ENCODE measurements at regions of chr3 and their contacts with region 1.

Region 1: GRCh38 chr3:5122030-5122740 is at the start of gene ARL8B:
- DNase-seq: peak; percentile 87 to 98 (median 91)
- ATAC-seq: peak; percentile 99
- H3K4me3 ChIP-seq: peak within 1 kb of the TSS; percentile 93 to 99 (median 96)
- H3K27ac ChIP-seq: peak within 1 kb of the TSS; percentile 62 to 87 (median 80)
- H3K4me1 ChIP-seq: peaks cover 0 to 25% (median 12%) of the 10 kb centered on the region in 3 donors
- H3K27me3 ChIP-seq: no peaks in the 10 kb centered on the region
- CTCF ChIP-seq: peak; percentile 89 to 99 (median 98)
- total RNA-seq, gene ARL8B: 16.9 to 31.9 (median 24.8) TPM

Region 2: DNA sequence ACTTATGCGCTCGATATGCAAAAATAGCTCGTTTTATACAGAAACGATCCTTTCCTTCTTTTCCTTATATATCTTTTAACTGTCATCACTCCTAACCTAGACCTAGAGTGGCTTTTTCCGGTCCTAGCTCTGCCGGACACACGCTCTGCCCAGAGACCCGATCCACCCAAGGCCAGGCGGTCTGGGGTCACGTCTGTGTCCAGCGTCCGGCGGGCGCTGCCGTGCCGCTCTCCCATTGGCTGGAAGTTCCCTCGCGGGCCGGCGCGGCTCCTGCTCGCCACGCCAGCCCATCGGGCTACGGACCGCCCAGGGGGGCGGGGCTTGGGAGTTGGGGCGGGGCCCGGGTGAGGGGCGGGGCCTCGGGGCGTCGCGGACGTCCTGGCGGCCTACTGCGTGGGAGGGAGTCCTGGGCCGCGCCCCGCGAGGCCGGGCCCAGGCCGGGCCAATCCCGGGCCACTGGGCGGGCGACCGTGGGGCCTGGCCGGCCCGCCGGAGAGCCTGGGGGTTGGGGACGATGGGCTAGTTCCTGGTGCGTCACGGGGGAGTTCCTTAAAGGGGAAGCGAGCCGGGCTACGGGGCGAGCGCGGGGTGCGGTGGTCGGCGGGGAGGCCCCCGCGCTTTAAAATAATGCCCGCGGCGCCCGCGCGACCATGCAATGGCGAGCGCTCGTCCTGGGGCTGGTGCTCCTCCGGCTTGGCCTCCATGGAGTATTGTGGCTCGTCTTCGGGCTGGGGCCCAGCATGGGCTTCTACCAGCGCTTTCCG is 65.2 kb after region 1 on chr3 and contains the start of gene EDEM1:
- intact Hi-C with region 1: loop called in 1 of 3 experiments (anchors 10 kb)
- DNase-seq: peak; percentile 96 to 100 (median 98)
- ATAC-seq: peak; percentile 88 to 94 (median 92)
- H3K4me3 ChIP-seq: peak within 1 kb of the TSS; percentile 61 to 99 (median 94)
- H3K27ac ChIP-seq: peak within 1 kb of the TSS; percentile 95 to 99 (median 97)
- H3K4me1 ChIP-seq: peaks cover 0 to 42% (median 13%) of the 10 kb centered on the region in 3 donors
- H3K27me3 ChIP-seq: no peaks in the 10 kb centered on the region
- CTCF ChIP-seq: no peak
- total RNA-seq, gene EDEM1: 24.4 to 37.9 (median 31.1) TPM